ENCODE measurements at regions of chr3 and their contacts with region 1.

Region 1: DNA sequence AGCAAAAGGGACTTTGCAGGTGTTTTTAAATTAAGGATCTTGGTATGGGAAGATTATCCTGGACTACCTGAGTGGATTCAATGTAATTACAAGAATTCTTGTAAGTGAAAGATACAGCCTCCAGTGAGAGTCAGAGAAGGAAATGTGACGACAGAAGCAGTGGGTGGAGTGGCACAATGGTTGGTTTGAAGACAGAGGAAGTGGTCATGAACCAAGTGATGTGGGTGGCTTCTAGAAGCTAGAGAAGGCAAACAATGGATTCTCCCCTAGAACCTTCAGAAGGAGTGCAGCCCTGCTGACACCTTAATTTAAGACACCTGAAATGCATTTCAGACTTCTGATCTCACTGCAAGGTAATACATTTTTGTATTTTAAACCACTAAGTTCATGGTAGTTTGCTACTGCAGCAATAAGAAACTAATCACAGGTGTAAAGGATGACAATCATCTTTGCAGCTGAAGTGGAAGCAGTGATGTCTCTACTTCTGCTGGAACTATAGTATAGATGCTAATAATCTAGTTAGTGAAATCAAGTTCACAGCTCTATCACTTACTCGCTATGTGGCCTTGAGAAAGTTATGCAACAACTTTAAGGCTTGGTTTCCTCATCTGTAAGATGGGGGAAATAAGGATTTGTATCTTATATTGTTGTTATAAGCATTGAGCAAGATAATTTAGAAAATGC is 403.4 kb upstream of the SUCLG2 start:
- DNase-seq: no peak
- H3K4me3 ChIP-seq: no peak overlapping the region
- H3K27ac ChIP-seq: no peak overlapping the region
- H3K4me1 ChIP-seq: no peaks in the 10 kb centered on the region
- H3K27me3 ChIP-seq: no peaks in the 10 kb centered on the region
- CTCF ChIP-seq: no peak
- POLR2A ChIP-seq: no peak

Region 2: DNA sequence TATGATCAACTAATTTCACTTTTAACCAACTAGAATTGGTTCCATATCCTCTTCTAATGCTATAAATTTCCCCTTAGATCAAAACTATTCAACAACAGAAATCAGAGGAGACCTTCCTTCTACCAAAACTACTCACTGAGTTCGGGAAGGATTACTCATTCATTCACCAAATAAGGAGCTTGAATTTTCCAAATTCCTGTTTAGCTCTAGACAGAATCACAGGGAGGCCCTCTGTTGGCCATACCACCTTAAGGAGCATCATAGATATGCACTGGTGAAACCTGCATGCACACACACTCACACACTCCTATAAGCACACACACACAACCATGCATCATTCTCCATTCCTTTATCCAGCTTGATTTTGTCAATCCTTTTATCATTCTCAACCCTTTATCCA is 452.4 kb before region 1 on chr3:
- intact Hi-C with region 1: loop called (anchors 10 kb)
- DNase-seq: no peak
- H3K4me3 ChIP-seq: no peak overlapping the region
- H3K27ac ChIP-seq: no peak overlapping the region
- H3K4me1 ChIP-seq: no peaks in the 10 kb centered on the region
- H3K27me3 ChIP-seq: no peaks in the 10 kb centered on the region
- CTCF ChIP-seq: no peak
- POLR2A ChIP-seq: no peak